Cardiac septum (tissue), 1 donor: ENCODE measurements at regions of chr15 and their contacts with region 1.

Region 1: GRCh38 chr15:44728576-44729407 is 7.5 kb upstream of the TRIM69 start:
- DNase-seq: peak; percentile 98

Region 2: DNA sequence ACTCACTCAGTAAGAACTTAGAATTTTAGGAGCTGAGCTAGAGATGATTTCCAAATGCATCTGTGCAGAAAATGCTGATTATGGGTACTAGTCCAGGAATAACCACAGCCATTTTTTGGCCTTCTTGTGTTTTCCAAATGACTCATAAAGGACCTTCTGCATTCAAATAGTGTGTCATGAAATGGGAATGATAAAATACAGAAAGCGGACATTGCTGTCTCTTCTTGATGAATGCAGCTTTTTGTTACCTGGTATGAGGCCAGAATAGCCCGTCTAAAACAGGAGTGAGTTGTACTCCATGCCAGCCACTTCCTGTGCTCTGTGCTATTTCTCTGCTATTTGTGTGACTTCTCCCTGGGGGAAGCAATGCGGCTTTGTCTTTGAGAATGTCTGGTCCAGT is 513.2 kb before region 1 on chr15:
- intact Hi-C with region 1: no loop called
- DNase-seq: no peak

Region 3: GRCh38 chr15:44426975-44427755 is 301.6 kb before region 1 on chr15 and contains the start of gene CTDSPL2:
- intact Hi-C with region 1: loop called (anchors 10 kb)
- DNase-seq: peak; percentile 99
- total RNA-seq, gene CTDSPL2: 19.0 TPM

Region 4: DNA sequence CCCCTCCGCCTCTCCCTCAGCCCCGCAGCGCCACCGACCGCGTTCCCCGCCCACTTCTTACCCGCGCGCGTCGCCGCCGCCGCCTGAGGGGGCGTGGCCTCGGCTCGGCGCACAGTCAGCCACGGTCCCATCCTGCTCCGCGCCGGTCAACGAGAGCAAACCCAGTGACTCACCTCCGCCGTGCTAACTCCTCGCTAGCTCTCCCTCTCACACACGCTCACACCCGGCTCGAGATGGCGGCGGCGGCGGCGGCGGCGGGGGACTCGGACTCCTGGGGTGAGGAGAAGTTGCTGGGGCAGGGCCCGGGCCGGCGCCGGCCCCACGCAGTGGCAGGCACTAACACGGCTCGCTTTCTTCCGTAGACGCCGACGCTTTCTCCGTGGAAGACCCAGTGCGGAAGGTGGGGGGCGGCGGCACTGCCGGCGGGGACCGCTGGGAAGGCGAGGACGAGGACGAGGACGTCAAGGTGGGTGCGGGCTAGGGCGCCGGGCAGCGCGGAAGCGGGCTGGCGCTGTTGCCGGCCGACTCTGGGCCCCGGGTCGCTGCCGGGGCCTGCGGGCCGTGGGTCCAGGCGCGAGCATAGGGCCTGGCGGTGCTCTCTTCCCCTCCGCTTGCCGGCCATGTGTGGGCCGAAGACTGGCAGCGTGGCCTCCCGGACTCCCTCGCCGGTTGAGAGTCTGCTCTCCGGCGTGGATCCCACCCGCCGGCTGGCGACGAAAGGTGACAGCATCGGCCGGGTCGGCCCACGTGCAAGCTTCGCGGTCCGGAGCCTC is 191.6 kb before region 1 on chr15 and contains the start of gene EIF3J:
- intact Hi-C with region 1: loop called (anchors 5 kb)
- DNase-seq: peak; percentile 98
- total RNA-seq, gene EIF3J: 78.4 TPM

Region 5: GRCh38 chr15:44663409-44664308 is 65.1 kb before region 1 on chr15 and contains the start of gene SPG11:
- intact Hi-C with region 1: loop called (anchors 2 kb)
- DNase-seq: peak; percentile 99
- total RNA-seq, gene SPG11: 49.2 TPM

Region 6: GRCh38 chr15:44711356-44712107 is 17.3 kb before region 1 on chr15 and contains the start of gene B2M:
- intact Hi-C with region 1: loop called (anchors 1 kb)
- DNase-seq: peak; percentile 98
- total RNA-seq, gene B2M: 904 TPM